Aorta (tissue), 5 donors: ENCODE measurements at regions of chr1 and their contacts with region 1.

Region 1: GRCh38 chr1:3133686-3134085 is 64.7 kb downstream of the PRDM16 start:
- DNase-seq: peak in 1 of 2 donors; percentile 70
- ATAC-seq: no peak
- H3K4me3 ChIP-seq: no peak overlapping the region
- H3K27ac ChIP-seq: peak overlapping the region; percentile 33 to 79
- H3K4me1 ChIP-seq: peaks cover 3 to 14% of the 10 kb centered on the region in 2 donors
- H3K27me3 ChIP-seq: no peaks in the 10 kb centered on the region

Region 2: DNA sequence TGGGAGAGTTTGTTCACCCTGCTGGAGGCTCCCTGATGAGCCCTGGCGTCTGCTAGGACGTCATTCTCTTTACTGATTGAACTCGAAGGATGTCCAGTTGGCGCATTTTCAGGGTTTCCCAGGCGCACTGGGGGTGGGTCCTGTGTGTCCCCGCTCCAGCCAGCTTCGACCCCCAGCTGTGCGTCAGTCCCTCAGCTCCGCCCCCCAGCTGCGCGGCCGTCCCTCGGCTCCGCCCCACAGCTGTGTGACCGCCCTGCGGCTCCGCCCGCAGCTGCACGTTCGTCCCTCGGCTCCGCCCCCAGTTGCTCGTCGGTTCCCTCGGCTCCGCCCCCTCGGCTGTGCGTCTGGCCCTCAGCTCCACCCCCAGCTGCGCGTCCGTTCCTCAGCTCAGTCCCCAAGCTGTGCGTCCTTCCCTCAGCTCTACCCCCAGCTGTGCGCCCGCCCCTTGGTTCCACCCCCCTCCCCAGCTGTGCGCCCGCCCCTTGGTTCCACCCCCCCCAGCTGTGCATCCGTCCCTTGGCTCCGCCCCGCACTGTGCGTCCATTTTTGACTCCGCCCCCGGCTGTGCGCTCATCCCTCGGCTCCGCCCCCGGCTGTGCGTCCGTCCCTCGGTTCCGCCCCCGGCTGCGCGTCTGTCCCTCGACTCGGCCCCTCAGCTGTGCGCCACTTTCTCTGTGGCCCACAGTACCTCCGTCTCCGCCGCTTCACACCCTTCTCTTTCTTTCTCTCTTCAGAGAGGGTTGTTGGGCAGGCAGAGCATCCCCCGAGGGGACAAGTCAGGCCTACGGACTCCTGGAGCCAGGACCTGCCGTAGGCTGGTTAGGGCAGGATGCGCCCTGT is 1000.4 kb before region 1 on chr1:
- intact Hi-C with region 1: no loop called
- DNase-seq: peak; percentile 98 to 99
- ATAC-seq: peak; percentile 95
- H3K4me3 ChIP-seq: peak overlapping the region in 1 of 2 donors; percentile 4
- H3K27ac ChIP-seq: no peak overlapping the region
- H3K4me1 ChIP-seq: no peaks in the 10 kb centered on the region
- H3K27me3 ChIP-seq: no peaks in the 10 kb centered on the region

Region 3: GRCh38 chr1:3170561-3171453 is 37.1 kb after region 1 on chr1:
- intact Hi-C with region 1: loop called (anchors 5 kb)
- DNase-seq: peak; percentile 89 to 95
- ATAC-seq: peak; percentile 88
- H3K4me3 ChIP-seq: peak overlapping the region in 1 of 2 donors; percentile 8
- H3K27ac ChIP-seq: peak overlapping the region; percentile 78 to 93
- H3K4me1 ChIP-seq: peaks cover 5 to 6% of the 10 kb centered on the region in 2 donors
- H3K27me3 ChIP-seq: no peaks in the 10 kb centered on the region

Region 4: GRCh38 chr1:3186513-3186921 is 52.8 kb after region 1 on chr1:
- intact Hi-C with region 1: loop called (anchors 5 kb)
- DNase-seq: peak; percentile 95
- ATAC-seq: peak; percentile 83
- H3K4me3 ChIP-seq: no peak overlapping the region
- H3K27ac ChIP-seq: peak overlapping the region; percentile 85 to 89
- H3K4me1 ChIP-seq: no peaks in the 10 kb centered on the region
- H3K27me3 ChIP-seq: no peaks in the 10 kb centered on the region